Endothelial cell of umbilical vein (primary cell): ENCODE measurements at regions of chr13 and their contacts with region 1.

Region 1: GRCh38 chr13:89695343-89696257 is 1651.9 kb upstream of the MIR17HG start:
- DNase-seq: peak; percentile 68
- H3K4me3 ChIP-seq: no peak overlapping the region
- H3K27ac ChIP-seq: no peak overlapping the region
- H3K4me1 ChIP-seq: peaks cover 4% of the 10 kb centered on the region
- H3K27me3 ChIP-seq: no peaks in the 10 kb centered on the region
- CTCF ChIP-seq: peak; percentile 67 to 70
- POLR2A ChIP-seq: no peak

Region 2: GRCh38 chr13:89205856-89206520 is 489.6 kb before region 1 on chr13:
- CTCF ChIA-PET with region 1: no interaction called
- POLR2A ChIA-PET with region 1: no interaction called
- dilution Hi-C with region 1: no loop called
- intact Hi-C with region 1: no loop called
- DNase-seq: no peak
- H3K4me3 ChIP-seq: no peak overlapping the region
- H3K27ac ChIP-seq: no peak overlapping the region
- H3K4me1 ChIP-seq: no peaks in the 10 kb centered on the region
- H3K27me3 ChIP-seq: no peaks in the 10 kb centered on the region
- CTCF ChIP-seq: no peak
- POLR2A ChIP-seq: no peak

Region 3: GRCh38 chr13:89361909-89362308 is 333.7 kb before region 1 on chr13:
- CTCF ChIA-PET with region 1: interaction called, 98 read pairs
- POLR2A ChIA-PET with region 1: no interaction called
- dilution Hi-C with region 1: no loop called
- intact Hi-C with region 1: loop called (anchors 1 kb)
- DNase-seq: peak; percentile 26
- H3K4me3 ChIP-seq: no peak overlapping the region
- H3K27ac ChIP-seq: no peak overlapping the region
- H3K4me1 ChIP-seq: no peaks in the 10 kb centered on the region
- H3K27me3 ChIP-seq: no peaks in the 10 kb centered on the region
- CTCF ChIP-seq: peak in 1 of 2 donors; percentile 15
- POLR2A ChIP-seq: no peak

Region 4: DNA sequence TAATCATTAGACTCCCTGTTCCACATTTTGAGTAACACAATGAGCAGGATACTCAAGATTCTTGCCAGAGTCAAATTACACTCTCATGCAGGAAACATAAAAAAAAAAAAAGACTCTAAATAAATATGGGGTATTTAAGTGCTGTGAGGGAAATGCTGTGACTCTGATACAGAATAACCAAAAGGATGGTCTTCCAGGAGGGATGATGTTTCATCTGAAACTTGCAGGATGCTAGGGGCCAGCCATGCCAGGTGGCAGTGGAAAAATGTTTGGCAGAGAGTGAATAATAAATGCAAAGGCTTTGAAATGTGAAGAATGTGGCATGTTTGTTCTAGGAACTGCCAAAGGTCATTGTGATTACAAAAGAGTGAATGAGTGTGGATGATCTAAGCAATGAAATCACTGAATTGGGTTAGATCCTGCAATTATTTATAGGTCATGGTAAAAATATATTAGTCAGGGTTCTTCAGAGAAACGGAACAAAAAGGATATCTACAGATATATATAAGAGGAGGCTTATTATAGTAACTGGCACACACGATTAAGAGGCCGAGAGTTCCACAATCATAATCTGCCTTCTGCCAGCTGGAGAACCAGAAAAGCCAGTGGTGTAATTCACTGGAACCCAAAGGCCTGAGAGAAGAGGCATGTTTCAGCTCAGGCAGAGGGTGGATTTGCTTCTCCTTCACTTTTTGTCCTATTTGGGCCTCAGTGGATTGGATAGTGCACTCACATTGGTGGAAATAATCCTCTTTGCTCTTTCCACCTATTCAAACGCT is 180.9 kb before region 1 on chr13:
- CTCF ChIA-PET with region 1: interaction called, 7 read pairs
- POLR2A ChIA-PET with region 1: no interaction called
- dilution Hi-C with region 1: no loop called
- intact Hi-C with region 1: loop called (anchors 1 kb)
- DNase-seq: peak; percentile 97
- H3K4me3 ChIP-seq: no peak overlapping the region
- H3K27ac ChIP-seq: peak overlapping the region; percentile 98
- H3K4me1 ChIP-seq: peaks cover 29% of the 10 kb centered on the region
- H3K27me3 ChIP-seq: no peaks in the 10 kb centered on the region
- CTCF ChIP-seq: no peak
- POLR2A ChIP-seq: peak; percentile 42

Region 5: GRCh38 chr13:89708013-89708412 is 12.4 kb after region 1 on chr13:
- CTCF ChIA-PET with region 1: interaction called, 11 read pairs
- POLR2A ChIA-PET with region 1: no interaction called
- dilution Hi-C with region 1: no loop called
- intact Hi-C with region 1: no loop called
- DNase-seq: no peak
- H3K4me3 ChIP-seq: no peak overlapping the region
- H3K27ac ChIP-seq: no peak overlapping the region
- H3K4me1 ChIP-seq: no peaks in the 10 kb centered on the region
- H3K27me3 ChIP-seq: no peaks in the 10 kb centered on the region
- CTCF ChIP-seq: no peak
- POLR2A ChIP-seq: no peak

Region 6: GRCh38 chr13:90867336-90867683 is 1171.7 kb after region 1 on chr13:
- CTCF ChIA-PET with region 1: interaction called, 5 read pairs
- POLR2A ChIA-PET with region 1: no interaction called
- dilution Hi-C with region 1: no loop called
- intact Hi-C with region 1: loop called (anchors 2 kb)
- DNase-seq: peak; percentile 36
- H3K4me3 ChIP-seq: no peak overlapping the region
- H3K27ac ChIP-seq: no peak overlapping the region
- H3K4me1 ChIP-seq: no peaks in the 10 kb centered on the region
- H3K27me3 ChIP-seq: no peaks in the 10 kb centered on the region
- CTCF ChIP-seq: peak; percentile 45 to 58
- POLR2A ChIP-seq: no peak